Endothelial cell of umbilical vein (primary cell): ENCODE measurements at regions of chr17 and their contacts with region 1.

Region 1: GRCh38 chr17:48678141-48678971 is 44.0 kb downstream of the PRAC1 start:
- DNase-seq: peak; percentile 53
- H3K4me3 ChIP-seq: no peak overlapping the region
- H3K27ac ChIP-seq: no peak overlapping the region
- H3K4me1 ChIP-seq: no peaks in the 10 kb centered on the region
- H3K27me3 ChIP-seq: peaks cover 13 to 19% of the 10 kb centered on the region in 2 experiments
- CTCF ChIP-seq: peak; percentile 95 to 100
- POLR2A ChIP-seq: no peak

Region 2: GRCh38 chr17:48690655-48691054 is 12.3 kb after region 1 on chr17:
- CTCF ChIA-PET with region 1: interaction called, 25 read pairs
- POLR2A ChIA-PET with region 1: no interaction called
- dilution Hi-C with region 1: no loop called
- intact Hi-C with region 1: no loop called
- DNase-seq: no peak
- H3K4me3 ChIP-seq: no peak overlapping the region
- H3K27ac ChIP-seq: no peak overlapping the region
- H3K4me1 ChIP-seq: no peaks in the 10 kb centered on the region
- H3K27me3 ChIP-seq: peaks cover 3 to 16% of the 10 kb centered on the region in 2 experiments
- CTCF ChIP-seq: no peak
- POLR2A ChIP-seq: no peak

Region 3: DNA sequence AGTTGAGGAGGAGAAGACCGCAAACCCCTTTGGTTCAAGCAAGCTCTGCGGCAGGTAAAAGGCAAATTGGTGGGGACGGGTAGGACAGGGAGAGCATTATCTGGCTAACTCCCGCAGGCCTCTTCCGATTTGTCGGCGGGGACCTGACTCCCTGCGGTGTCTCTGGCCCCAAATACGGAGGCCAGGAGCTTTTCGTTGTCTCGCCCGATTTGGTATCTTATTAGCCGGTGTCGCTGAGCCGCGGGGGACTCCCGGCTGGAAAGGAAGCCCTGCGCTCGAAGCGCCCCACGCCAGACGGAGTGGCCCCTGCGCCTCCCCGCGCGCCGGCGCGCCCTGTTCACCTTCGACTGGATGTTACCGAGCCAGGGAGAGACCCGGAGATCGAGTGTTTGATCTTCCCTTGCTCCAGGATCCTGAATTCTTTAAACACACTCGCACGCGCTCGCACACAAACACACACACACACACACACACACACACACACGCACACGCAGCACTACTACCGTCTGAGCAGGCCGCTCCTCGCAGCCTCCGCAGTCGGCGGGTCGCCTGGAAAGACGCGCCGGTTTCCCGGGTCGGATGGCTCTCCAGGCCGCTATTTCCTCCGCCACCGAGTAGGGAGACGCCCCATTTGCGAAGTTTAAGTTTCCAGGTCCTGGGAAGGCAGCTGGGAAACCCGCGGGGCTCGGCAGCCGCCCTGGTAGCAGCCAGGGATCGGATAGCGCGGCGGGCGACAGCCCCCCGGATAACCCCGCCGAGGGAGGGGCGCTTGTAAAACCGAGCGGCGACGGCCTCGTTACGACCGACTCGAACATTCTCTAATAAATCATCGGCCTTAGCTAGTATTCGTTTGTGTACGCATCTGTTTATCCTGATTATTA is 40.6 kb after region 1 on chr17:
- CTCF ChIA-PET with region 1: interaction called, 47 read pairs
- POLR2A ChIA-PET with region 1: no interaction called
- dilution Hi-C with region 1: no loop called
- intact Hi-C with region 1: loop called (anchors 2 kb)
- DNase-seq: no peak
- H3K4me3 ChIP-seq: no peak overlapping the region
- H3K27ac ChIP-seq: no peak overlapping the region
- H3K4me1 ChIP-seq: peaks cover 8% of the 10 kb centered on the region
- H3K27me3 ChIP-seq: peaks cover 73 to 88% of the 10 kb centered on the region in 2 experiments
- CTCF ChIP-seq: no peak
- POLR2A ChIP-seq: no peak

Region 4: DNA sequence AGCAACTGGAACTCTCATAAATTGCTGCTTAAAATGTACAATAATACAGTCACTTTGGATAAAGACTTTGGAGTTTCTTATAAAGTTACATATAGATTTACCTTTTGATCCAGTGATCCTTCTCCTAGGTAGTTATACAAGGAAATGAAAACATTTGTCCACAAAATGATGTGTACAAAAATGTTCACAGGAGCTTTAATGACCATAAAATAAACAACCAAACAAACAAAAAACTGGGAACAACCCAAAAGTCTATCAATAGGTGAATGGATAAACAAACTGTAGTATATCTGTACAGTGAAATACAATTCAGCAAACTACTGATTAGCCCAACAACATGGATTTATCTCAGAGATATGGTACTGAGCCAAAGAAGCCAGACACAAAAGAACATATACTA is 101.1 kb after region 1 on chr17:
- CTCF ChIA-PET with region 1: interaction called, 220 read pairs
- POLR2A ChIA-PET with region 1: no interaction called
- dilution Hi-C with region 1: loop called (anchors 25 kb)
- intact Hi-C with region 1: no loop called
- DNase-seq: no peak
- H3K4me3 ChIP-seq: no peak overlapping the region
- H3K27ac ChIP-seq: no peak overlapping the region
- H3K4me1 ChIP-seq: no peaks in the 10 kb centered on the region
- H3K27me3 ChIP-seq: peaks cover 0 to 11% of the 10 kb centered on the region in 2 experiments
- CTCF ChIP-seq: no peak
- POLR2A ChIP-seq: no peak

Region 5: GRCh38 chr17:48804925-48805411 is 126.6 kb after region 1 on chr17:
- CTCF ChIA-PET with region 1: interaction called, 17 read pairs
- POLR2A ChIA-PET with region 1: no interaction called
- dilution Hi-C with region 1: no loop called
- intact Hi-C with region 1: no loop called
- DNase-seq: peak; percentile 47
- H3K4me3 ChIP-seq: no peak overlapping the region
- H3K27ac ChIP-seq: no peak overlapping the region
- H3K4me1 ChIP-seq: no peaks in the 10 kb centered on the region
- H3K27me3 ChIP-seq: peaks cover 2 to 5% of the 10 kb centered on the region in 2 experiments
- CTCF ChIP-seq: peak; percentile 87 to 94
- POLR2A ChIP-seq: no peak